HepG2 (cell line): ENCODE measurements at regions of chr1 and their contacts with region 1.

Region 1: DNA sequence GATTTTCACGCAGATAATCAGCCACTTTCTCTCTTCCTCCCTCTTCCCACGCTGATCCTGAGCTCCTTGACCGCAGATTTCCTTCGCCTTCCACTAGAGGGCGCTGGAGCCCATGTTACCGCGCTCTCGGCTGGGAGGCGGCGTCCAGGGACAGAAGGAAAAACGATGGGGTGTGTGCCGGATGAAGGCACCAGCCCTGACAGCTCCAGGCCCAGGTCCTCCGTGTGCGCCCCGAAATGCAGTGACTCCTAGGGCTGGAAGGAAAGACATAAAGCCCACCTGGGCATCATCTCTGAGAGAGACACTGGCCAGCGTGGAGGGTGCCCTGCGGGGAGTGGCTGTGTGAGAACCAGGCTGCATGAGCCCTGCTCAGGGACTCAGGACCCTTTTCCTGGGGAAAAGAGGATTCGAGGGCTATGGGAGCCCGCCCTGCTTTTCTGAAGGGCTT is 44.9 kb upstream of the CYP2J2 start:
- DNase-seq: peak; percentile 28
- ATAC-seq: peak; percentile 96
- H3K4me3 ChIP-seq: peak overlapping the region in 1 of 3 experiments; percentile 2; a peak in 1 of 6 replicates
- H3K27ac ChIP-seq: no peak overlapping the region
- H3K4me1 ChIP-seq: no peaks in the 10 kb centered on the region
- H3K27me3 ChIP-seq: peaks cover 0 to 34% of the 10 kb centered on the region in 2 experiments; a peak in 2 of 5 replicates
- CTCF ChIP-seq: peak; percentile 93
- EP300 ChIP-seq: no peak
- POLR2A ChIP-seq: no peak
- RAD21 ChIP-seq: peak; percentile 63

Region 2: DNA sequence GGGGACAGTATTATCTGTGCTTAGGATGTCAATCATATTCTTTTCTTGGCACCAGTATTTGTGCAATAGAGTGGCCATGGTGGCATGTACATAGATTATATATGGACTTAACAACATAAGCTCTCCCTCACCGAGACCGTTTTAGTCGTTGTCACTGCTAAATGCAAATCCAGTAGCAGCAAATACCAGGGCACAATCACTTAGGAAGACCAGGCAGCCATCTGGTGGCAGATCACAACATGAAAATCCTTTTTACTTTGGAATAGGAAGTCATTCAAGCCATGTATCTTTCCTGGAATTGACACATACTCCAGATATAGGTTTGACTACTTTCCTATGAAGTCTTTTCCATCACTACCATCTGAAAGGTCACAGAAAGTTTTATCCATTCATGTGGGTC is 155.2 kb after region 1 on chr1:
- CTCF ChIA-PET with region 1: no interaction called
- POLR2A ChIA-PET with region 1: no interaction called
- in situ Hi-C with region 1: no loop called
- intact Hi-C with region 1: loop called (anchors 10 kb)
- DNase-seq: no peak
- ATAC-seq: no peak
- H3K4me3 ChIP-seq: no peak overlapping the region
- H3K27ac ChIP-seq: no peak overlapping the region
- H3K4me1 ChIP-seq: no peaks in the 10 kb centered on the region
- H3K27me3 ChIP-seq: no peaks in the 10 kb centered on the region
- CTCF ChIP-seq: no peak
- EP300 ChIP-seq: no peak
- POLR2A ChIP-seq: no peak
- RAD21 ChIP-seq: no peak

Region 3: GRCh38 chr1:60425528-60425927 is 454.0 kb after region 1 on chr1:
- CTCF ChIA-PET with region 1: no interaction called
- POLR2A ChIA-PET with region 1: no interaction called
- in situ Hi-C with region 1: no loop called
- intact Hi-C with region 1: loop called (anchors 10 kb)
- DNase-seq: peak; percentile 30
- ATAC-seq: peak; percentile 93
- H3K4me3 ChIP-seq: no peak overlapping the region
- H3K27ac ChIP-seq: no peak overlapping the region
- H3K4me1 ChIP-seq: no peaks in the 10 kb centered on the region
- H3K27me3 ChIP-seq: no peaks in the 10 kb centered on the region
- CTCF ChIP-seq: peak; percentile 40
- EP300 ChIP-seq: no peak
- POLR2A ChIP-seq: no peak
- RAD21 ChIP-seq: no peak

Region 4: GRCh38 chr1:60765204-60765603 is 793.7 kb after region 1 on chr1:
- CTCF ChIA-PET with region 1: interaction called, 4 read pairs
- POLR2A ChIA-PET with region 1: no interaction called
- in situ Hi-C with region 1: no loop called
- intact Hi-C with region 1: loop called (anchors 10 kb)
- DNase-seq: peak; percentile 46
- ATAC-seq: peak; percentile 89
- H3K4me3 ChIP-seq: no peak overlapping the region
- H3K27ac ChIP-seq: no peak overlapping the region
- H3K4me1 ChIP-seq: no peaks in the 10 kb centered on the region
- H3K27me3 ChIP-seq: no peaks in the 10 kb centered on the region
- CTCF ChIP-seq: peak; percentile 79
- EP300 ChIP-seq: no peak
- POLR2A ChIP-seq: no peak
- RAD21 ChIP-seq: no peak

Region 5: GRCh38 chr1:61043010-61043820 is 1071.7 kb after region 1 on chr1:
- CTCF ChIA-PET with region 1: no interaction called
- POLR2A ChIA-PET with region 1: no interaction called
- in situ Hi-C with region 1: no loop called
- intact Hi-C with region 1: loop called (anchors 5 kb)
- DNase-seq: peak; percentile 37
- ATAC-seq: peak; percentile 99
- H3K4me3 ChIP-seq: peak overlapping the region; percentile 26 to 75 (median 52); a peak in 5 of 6 replicates
- H3K27ac ChIP-seq: no peak overlapping the region
- H3K4me1 ChIP-seq: peaks cover 6% of the 10 kb centered on the region; the same call in 1 of the 2 replicates
- H3K27me3 ChIP-seq: peaks cover 2 to 16% of the 10 kb centered on the region in 2 experiments; a peak in 4 of 5 replicates
- CTCF ChIP-seq: peak; percentile 94
- EP300 ChIP-seq: no peak
- POLR2A ChIP-seq: no peak
- RAD21 ChIP-seq: peak; percentile 88